Activated CD4-positive, alpha-beta memory T cell treated with anti-CD3 and anti-CD28 coated beads for 36 hours (primary cell): ENCODE measurements at regions of chr6 and their contacts with region 1.

Region 1: GRCh38 chr6:10800829-10801535 is 37.4 kb downstream of the MAK start:
- DNase-seq: peak; percentile 75
- H3K4me3 Mint-ChIP-seq: no peak overlapping the region
- H3K27ac Mint-ChIP-seq: no peak overlapping the region
- H3K4me1 Mint-ChIP-seq: no peaks in the 10 kb centered on the region
- H3K27me3 Mint-ChIP-seq: no peaks in the 10 kb centered on the region

Region 2: DNA sequence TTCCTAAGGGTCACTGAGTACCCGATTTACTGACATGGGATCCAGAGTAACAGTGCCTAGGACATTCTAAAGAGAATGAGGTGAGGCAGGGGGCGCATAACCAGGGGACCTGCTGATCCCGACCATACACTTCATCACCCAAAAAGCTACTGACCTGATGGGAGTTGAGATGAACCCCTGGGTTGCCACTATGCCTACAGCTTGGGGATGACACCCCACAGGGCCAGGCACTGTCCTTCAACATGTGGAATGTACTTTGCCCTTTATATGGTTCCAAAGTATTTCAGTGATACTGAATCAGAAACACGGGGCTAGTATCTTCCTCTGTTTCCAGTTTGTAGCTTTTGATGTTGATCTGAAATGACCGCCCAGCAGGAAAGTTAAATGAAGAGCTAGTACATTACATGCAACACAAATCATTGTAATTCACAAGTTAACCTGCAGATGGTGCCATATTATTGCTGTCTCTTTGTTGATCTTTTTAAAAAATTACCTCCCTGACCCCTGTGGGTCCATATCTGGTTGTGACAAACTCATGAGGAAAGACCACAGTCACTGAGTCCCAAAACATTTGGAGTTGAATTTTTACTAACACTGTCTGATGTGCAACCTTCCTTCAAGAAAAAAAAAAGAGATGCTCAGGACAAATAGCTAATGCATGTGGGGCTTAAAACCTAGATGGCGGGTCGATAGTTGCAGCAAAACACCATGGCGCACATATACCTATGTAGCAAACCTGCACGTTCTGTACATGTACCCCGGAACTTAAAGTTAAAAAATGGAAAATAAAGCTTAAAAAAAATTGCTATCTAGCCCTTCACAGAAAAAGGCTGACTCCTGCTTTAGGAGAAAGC is 322.6 kb before region 1 on chr6:
- CTCF ChIA-PET with region 1: interaction called, 21 read pairs
- POLR2A ChIA-PET with region 1: no interaction called
- intact Hi-C with region 1: loop called (anchors 1 kb)
- DNase-seq: no peak
- H3K4me3 Mint-ChIP-seq: no peak overlapping the region
- H3K27ac Mint-ChIP-seq: no peak overlapping the region
- H3K4me1 Mint-ChIP-seq: no peaks in the 10 kb centered on the region
- H3K27me3 Mint-ChIP-seq: peaks cover 9% of the 10 kb centered on the region

Region 3: DNA sequence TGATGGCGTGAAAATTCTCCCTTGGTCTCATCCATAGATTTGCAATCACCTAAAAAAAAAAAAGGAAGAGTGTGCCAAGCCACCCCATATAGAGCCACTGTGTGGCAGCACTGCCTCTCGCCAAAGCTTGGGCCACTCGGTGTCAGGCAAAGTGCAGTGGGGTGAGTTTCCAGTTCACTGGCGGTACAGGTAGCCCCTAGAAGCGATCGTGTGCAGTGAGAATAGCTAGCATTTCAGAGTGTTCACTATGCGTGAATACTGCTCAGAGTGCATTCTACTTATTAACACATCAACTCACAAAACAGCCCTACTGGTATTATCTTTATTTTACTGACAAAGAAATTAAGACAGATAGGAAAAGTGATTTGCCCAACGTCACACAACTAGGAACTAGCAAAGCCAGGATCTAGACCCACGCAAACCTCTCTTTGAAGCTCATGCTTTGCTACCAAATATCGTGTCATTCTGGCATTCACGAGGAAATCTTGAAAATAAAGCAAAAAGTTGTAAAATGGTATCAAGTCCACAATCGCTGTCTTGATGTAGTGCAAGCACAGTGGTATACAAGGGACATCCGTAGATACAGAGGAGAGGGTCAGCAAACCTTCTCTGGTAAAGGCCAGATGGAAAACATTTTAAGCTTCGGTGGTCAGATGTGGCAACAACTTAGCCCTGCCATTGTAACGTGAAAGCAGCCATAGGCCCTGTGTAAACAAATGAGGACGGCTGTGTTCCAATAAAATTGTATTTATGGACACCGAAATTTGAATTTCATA is 290.2 kb before region 1 on chr6:
- CTCF ChIA-PET with region 1: interaction called, 4 read pairs
- POLR2A ChIA-PET with region 1: no interaction called
- intact Hi-C with region 1: loop called (anchors 1 kb)
- DNase-seq: peak; percentile 62
- H3K4me3 Mint-ChIP-seq: no peak overlapping the region
- H3K27ac Mint-ChIP-seq: no peak overlapping the region
- H3K4me1 Mint-ChIP-seq: peaks cover 4% of the 10 kb centered on the region
- H3K27me3 Mint-ChIP-seq: peaks cover 6% of the 10 kb centered on the region

Region 4: DNA sequence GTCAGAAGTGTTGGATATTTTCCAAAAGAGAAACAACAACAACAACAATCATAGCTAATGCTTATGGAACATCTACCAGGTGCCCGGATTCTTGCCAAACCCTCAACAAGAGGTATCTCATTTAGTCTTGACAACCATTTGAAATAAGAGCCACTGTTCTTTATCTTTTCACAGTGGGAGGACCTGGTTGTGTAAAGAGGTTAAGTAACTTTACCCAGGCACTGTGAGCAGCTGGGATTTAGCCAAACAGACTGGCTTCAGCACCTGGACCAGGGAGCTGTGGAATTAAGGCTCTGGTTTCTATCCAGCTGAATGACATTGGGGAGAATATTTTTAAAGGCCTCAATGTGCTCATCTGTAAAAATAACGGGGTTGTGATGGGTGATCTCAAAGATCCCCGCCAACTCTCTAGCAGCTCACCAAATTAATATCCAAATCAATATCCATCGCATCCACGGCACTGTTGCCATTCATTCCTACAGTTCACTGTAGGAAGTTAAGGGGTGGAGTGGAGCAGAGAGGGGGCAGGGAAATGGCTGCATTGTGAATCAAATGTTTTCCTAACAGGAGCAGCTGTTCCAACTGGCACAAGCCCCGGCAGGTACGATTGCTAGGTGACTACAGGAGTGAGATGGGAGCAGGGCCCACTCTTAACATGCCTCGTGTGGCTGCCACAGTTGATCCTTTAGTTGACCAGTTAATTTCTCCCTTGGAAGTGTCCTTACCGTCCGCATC is 218.0 kb before region 1 on chr6:
- CTCF ChIA-PET with region 1: no interaction called
- POLR2A ChIA-PET with region 1: no interaction called
- intact Hi-C with region 1: no loop called
- DNase-seq: no peak
- H3K4me3 Mint-ChIP-seq: no peak overlapping the region
- H3K27ac Mint-ChIP-seq: no peak overlapping the region
- H3K4me1 Mint-ChIP-seq: peaks cover 5% of the 10 kb centered on the region
- H3K27me3 Mint-ChIP-seq: no peaks in the 10 kb centered on the region